ENCODE measurements at regions of chr5 and their contacts with region 1.

Region 1: GRCh38 chr5:126676195-126676624 is 75.5 kb downstream of the PHAX start:
- DNase-seq: peak; percentile 62
- H3K4me3 ChIP-seq: no peak overlapping the region
- H3K27ac ChIP-seq: no peak overlapping the region
- H3K4me1 ChIP-seq: no peaks in the 10 kb centered on the region
- H3K27me3 ChIP-seq: no peaks in the 10 kb centered on the region
- CTCF ChIP-seq: peak; percentile 60 to 62 (median 60)
- POLR2A ChIP-seq: no peak

Region 2: GRCh38 chr5:125245216-125245615 is 1431.0 kb before region 1 on chr5:
- intact Hi-C with region 1: no loop called
- DNase-seq: no peak
- H3K4me3 ChIP-seq: no peak overlapping the region
- H3K27ac ChIP-seq: no peak overlapping the region
- H3K4me1 ChIP-seq: peaks cover 7% of the 10 kb centered on the region
- H3K27me3 ChIP-seq: no peaks in the 10 kb centered on the region
- CTCF ChIP-seq: no peak
- POLR2A ChIP-seq: no peak

Region 3: DNA sequence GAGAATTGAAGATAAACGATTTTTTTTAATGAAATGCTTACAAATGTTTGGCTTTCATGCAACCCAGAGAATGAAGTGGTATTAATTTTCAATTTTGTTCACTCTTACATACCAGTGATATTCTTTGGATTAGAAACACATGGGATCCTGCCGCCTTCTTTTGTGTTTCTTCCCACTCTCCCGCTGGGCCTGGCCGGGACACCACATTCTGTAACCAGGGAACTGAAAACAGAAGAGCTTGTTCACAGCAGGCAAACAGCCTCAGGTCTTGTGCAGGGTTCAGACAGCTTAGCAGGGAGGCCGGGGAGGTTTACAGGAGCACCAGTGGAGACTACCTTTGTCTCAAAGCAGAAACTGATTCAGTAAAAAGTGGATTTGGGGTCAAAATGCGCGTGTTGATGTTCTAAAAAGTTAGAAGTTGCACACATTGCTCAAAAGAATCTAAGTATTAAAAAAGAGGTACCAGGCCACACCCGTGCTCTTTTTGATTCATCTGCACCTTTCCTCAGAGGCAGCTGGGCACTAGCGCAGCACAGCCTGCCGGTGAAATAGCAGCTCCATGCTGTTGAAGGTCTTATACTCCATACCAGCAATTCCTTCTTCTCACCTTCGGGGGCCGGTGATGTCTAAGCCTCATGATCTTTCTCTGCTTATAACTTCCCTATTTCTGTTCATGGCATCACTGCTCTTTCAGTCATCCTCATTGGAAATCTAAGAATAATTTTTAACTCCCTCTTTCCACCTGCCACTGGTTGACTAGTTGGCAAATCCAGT is 185.9 kb before region 1 on chr5:
- intact Hi-C with region 1: no loop called
- DNase-seq: peak; percentile 53
- H3K4me3 ChIP-seq: no peak overlapping the region
- H3K27ac ChIP-seq: peak overlapping the region; percentile 20 to 75
- H3K4me1 ChIP-seq: peaks cover 24% of the 10 kb centered on the region
- H3K27me3 ChIP-seq: no peaks in the 10 kb centered on the region
- CTCF ChIP-seq: peak in 1 of 3 experiments; percentile 10
- POLR2A ChIP-seq: no peak

Region 4: GRCh38 chr5:126780165-126780827 is 104.1 kb after region 1 on chr5:
- intact Hi-C with region 1: loop called (anchors 10 kb)
- DNase-seq: peak; percentile 62
- H3K4me3 ChIP-seq: no peak overlapping the region
- H3K27ac ChIP-seq: no peak overlapping the region
- H3K4me1 ChIP-seq: no peaks in the 10 kb centered on the region
- H3K27me3 ChIP-seq: no peaks in the 10 kb centered on the region
- CTCF ChIP-seq: peak; percentile 56 to 62 (median 58)
- POLR2A ChIP-seq: no peak

Region 5: GRCh38 chr5:126927429-126927828 is 251.2 kb after region 1 on chr5:
- intact Hi-C with region 1: no loop called
- DNase-seq: no peak
- H3K4me3 ChIP-seq: no peak overlapping the region
- H3K27ac ChIP-seq: no peak overlapping the region
- H3K4me1 ChIP-seq: no peaks in the 10 kb centered on the region
- H3K27me3 ChIP-seq: no peaks in the 10 kb centered on the region
- CTCF ChIP-seq: no peak
- POLR2A ChIP-seq: no peak

Region 6: DNA sequence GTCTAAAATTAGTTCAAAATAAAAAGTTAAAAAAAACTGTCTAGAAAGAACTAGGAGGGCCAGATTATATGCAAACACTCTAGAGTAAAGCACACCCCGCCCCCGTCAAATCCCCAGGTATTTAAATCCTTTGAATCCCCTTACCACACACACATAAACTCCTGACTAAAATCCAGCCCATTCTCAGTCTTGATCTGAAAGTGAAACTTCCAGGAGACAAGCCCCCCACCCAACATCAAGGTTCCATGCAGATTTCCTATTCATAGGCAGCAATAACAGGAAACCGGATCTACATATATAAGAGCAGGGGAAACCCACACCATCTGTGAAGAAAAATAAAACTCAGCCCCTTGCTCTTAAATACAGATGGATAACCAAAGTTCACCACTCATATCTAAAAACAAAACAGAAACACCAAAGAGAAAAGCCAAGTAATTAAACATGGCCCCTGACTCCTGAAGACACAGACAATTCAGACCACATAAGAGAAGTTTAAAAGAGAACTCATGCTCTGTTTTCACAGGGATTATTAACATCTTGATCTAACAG is 311.9 kb after region 1 on chr5:
- intact Hi-C with region 1: no loop called
- DNase-seq: no peak
- H3K4me3 ChIP-seq: no peak overlapping the region
- H3K27ac ChIP-seq: no peak overlapping the region
- H3K4me1 ChIP-seq: no peaks in the 10 kb centered on the region
- H3K27me3 ChIP-seq: no peaks in the 10 kb centered on the region
- CTCF ChIP-seq: no peak
- POLR2A ChIP-seq: no peak